Tibial artery (tissue), 4 donors: ENCODE measurements at regions of chr21 and their contacts with region 1.

Region 1: DNA sequence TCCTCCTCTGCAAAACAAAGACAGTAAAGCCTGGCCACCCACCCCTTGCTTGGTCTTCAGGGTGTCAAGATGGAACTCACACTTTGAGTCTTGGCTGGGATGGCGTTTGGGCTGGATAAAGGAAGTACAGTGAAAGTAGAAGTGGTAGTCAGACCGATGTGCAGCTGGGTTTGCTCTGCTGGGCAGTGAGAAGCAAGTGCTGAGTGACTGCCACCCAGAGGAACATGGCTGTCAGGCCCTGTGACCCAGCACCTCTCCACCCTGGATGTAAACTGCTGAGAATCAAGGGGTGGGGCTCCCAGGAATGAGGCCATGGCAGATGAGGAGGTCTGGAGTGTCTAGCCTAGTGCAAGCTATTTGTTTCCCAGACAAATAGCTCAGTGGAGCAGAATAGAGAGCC is 51.2 kb downstream of the POFUT2 start:
- DNase-seq: peak in 1 of 2 donors; percentile 57
- H3K4me3 ChIP-seq: no peak overlapping the region
- H3K27ac ChIP-seq: no peak overlapping the region
- H3K4me1 ChIP-seq: no peaks in the 10 kb centered on the region
- H3K27me3 ChIP-seq: peaks cover 0 to 12% of the 10 kb centered on the region in 2 donors
- CTCF ChIP-seq: no peak

Region 2: GRCh38 chr21:45167796-45168222 is 68.7 kb before region 1 on chr21:
- intact Hi-C with region 1: loop called (anchors 10 kb)
- DNase-seq: no peak
- H3K4me3 ChIP-seq: no peak overlapping the region
- H3K27ac ChIP-seq: peak overlapping the region; percentile 53 to 65
- H3K4me1 ChIP-seq: peaks cover 0 to 85% (median 58%) of the 10 kb centered on the region in 4 donors
- H3K27me3 ChIP-seq: no peaks in the 10 kb centered on the region
- CTCF ChIP-seq: no peak

Region 3: GRCh38 chr21:45336870-45337269 is 100.4 kb after region 1 on chr21:
- intact Hi-C with region 1: no loop called
- DNase-seq: peak in 1 of 2 donors; percentile 92
- H3K4me3 ChIP-seq: no peak overlapping the region
- H3K27ac ChIP-seq: peak overlapping the region; percentile 7 to 46
- H3K4me1 ChIP-seq: peaks cover 0 to 22% (median 5%) of the 10 kb centered on the region in 4 donors
- H3K27me3 ChIP-seq: no peaks in the 10 kb centered on the region
- CTCF ChIP-seq: no peak